IMR-90 (cell line): ENCODE measurements at regions of chr13 and their contacts with region 1.

Region 1: DNA sequence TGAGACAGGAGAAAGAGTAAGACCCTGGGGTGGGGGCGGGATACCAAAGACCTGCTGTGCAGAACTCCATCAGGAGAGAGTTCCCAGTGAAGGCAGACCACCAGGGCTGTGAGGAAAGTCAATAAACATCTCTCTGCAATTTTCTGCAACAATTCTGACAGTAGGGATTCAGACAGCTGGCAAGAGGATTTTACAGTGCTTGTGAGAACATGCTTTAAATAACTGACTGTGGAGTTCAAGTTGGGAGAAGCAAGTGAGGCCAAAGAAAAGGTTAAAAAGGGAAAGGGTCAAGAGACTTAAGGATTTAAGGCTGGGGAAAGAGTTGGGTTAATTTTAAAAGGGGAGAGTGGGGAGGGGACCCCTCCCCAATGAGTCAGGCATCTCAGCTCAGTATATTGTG is 98.4 kb downstream of the USP12 start:
- DNase-seq: no peak
- ATAC-seq: no peak
- H3K4me3 ChIP-seq: no peak overlapping the region
- H3K27ac ChIP-seq: no peak overlapping the region
- H3K4me1 ChIP-seq: 0 out of 2 replicates have a peak, but pooled peaks cover 2% of the 10 kb centered on the region
- H3K27me3 ChIP-seq: no peaks in the 10 kb centered on the region
- CTCF ChIP-seq: no peak
- POLR2A ChIP-seq: no peak
- RAD21 ChIP-seq: no peak

Region 2: DNA sequence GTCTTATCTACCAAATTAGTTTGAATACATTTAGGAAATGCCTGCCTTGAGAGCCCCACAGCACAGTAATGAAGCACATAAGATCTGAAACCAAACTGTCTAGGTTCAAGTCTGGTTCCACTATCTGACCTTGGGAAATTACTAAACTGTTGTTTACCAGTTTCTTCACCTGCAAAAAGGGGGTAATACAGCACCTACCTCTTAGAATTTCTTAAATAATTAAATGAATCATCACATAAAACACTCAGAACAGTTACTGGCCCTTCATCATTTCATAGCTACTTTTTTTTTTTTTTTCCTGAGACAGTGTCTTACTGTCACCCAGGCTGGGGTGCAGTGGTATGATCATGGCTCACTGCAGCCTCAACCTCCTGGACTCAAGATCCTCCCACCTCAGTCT is 38.8 kb after region 1 on chr13:
- CTCF ChIA-PET with region 1: no interaction called
- POLR2A ChIA-PET with region 1: no interaction called
- dilution Hi-C with region 1: no loop called
- in situ Hi-C with region 1: no loop called
- intact Hi-C with region 1: loop called (anchors 5 kb)
- DNase-seq: no peak
- ATAC-seq: no peak
- H3K4me3 ChIP-seq: no peak overlapping the region
- H3K27ac ChIP-seq: no peak overlapping the region
- H3K4me1 ChIP-seq: peaks cover 4% of the 10 kb centered on the region
- H3K27me3 ChIP-seq: no peaks in the 10 kb centered on the region
- CTCF ChIP-seq: no peak
- POLR2A ChIP-seq: no peak
- RAD21 ChIP-seq: no peak

Region 3: DNA sequence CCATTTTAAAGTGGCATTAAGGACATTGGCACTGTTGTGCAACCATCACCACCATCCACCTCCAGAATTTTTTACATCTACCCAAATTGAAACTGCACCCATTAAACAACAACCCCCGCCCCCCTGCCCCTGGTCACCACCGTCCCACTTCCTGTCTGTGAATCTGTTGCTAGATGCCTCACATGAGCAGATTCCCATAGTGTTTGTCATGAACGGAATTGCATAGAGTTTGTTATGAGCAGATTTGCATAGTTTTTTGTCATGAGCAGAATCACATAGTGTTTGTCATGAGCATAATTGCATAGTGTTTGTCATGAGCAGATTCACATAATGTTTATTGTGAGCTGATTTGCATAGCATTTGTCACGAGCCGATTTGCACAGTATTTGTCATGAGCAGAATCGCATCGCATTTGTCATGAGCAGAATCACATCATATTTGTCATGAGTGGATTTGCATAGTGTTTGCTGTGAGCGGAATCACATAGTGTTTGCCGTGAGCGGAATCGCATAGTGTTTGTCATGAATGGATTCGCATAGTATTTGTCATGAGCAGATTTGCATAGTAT is 297.2 kb after region 1 on chr13:
- CTCF ChIA-PET with region 1: no interaction called
- POLR2A ChIA-PET with region 1: no interaction called
- dilution Hi-C with region 1: no loop called
- in situ Hi-C with region 1: no loop called
- intact Hi-C with region 1: no loop called
- DNase-seq: no peak
- ATAC-seq: no peak
- H3K4me3 ChIP-seq: no peak overlapping the region
- H3K27ac ChIP-seq: no peak overlapping the region
- H3K4me1 ChIP-seq: no peaks in the 10 kb centered on the region
- H3K27me3 ChIP-seq: peaks cover 40% of the 10 kb centered on the region
- CTCF ChIP-seq: no peak
- POLR2A ChIP-seq: no peak
- RAD21 ChIP-seq: no peak